Naive thymus-derived CD4-positive, alpha-beta T cell (primary cell): ENCODE measurements at regions of chr15 and their contacts with region 1.

Region 1: DNA sequence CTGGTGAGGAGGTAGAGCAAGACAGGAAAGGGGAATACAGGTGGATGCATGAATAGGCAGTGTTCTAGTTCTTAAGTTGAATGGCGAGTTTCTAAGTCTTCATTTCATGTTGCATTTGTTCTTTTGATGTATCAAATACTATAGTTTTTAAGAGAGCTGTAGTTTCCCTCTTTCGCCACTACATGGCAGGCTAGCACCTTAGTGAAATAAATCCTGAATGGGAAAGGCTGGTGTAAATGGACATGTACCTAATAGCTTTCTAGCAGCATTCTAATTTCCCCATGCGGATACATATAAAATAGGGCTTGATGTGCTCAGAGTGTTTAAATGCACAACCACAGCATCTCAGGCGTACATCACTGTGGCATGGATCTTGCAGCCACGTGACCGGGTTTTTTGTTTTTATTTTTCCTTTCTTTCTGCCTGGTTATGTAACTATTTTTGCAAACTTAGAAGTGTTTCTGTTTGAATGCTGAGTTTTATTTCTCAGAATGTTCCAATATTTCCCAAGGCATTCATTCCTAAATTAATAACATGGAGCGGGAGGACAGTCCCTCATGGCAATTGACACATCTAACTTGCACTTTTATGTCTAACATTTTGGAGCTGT is 23.5 kb upstream of the CLN6 start:
- DNase-seq: peak in 7 of 9 donors; percentile 42 to 64 (median 56)
- ATAC-seq: peak; percentile 72
- H3K4me3 ChIP-seq: no peak overlapping the region
- H3K4me3 Mint-ChIP-seq: no peak overlapping the region
- H3K27ac ChIP-seq: no peak overlapping the region
- H3K27ac Mint-ChIP-seq: no peak overlapping the region
- H3K4me1 ChIP-seq: no peaks in the 10 kb centered on the region
- H3K4me1 Mint-ChIP-seq: peaks cover 0 to 14% (median 4%) of the 10 kb centered on the region in 7 donors
- H3K27me3 ChIP-seq: no peaks in the 10 kb centered on the region
- H3K27me3 Mint-ChIP-seq: peaks cover 0 to 33% (median 0%) of the 10 kb centered on the region in 5 donors

Region 2: GRCh38 chr15:68298882-68299381 is 45.9 kb after region 1 on chr15:
- CTCF ChIA-PET with region 1: interaction called, 11 read pairs
- POLR2A ChIA-PET with region 1: interaction called, 4 read pairs
- intact Hi-C with region 1: no loop called
- DNase-seq: peak in 7 of 9 donors; percentile 37 to 56 (median 40)
- ATAC-seq: peak; percentile 82
- H3K4me3 ChIP-seq: peak overlapping the region; percentile 61
- H3K4me3 Mint-ChIP-seq: peak overlapping the region; percentile 58 to 85 (median 81)
- H3K27ac ChIP-seq: peak overlapping the region; percentile 64
- H3K27ac Mint-ChIP-seq: peak overlapping the region; percentile 79 to 95 (median 87)
- H3K4me1 ChIP-seq: peaks cover 11 to 16% of the 10 kb centered on the region in 2 donors
- H3K4me1 Mint-ChIP-seq: peaks cover 17 to 56% (median 44%) of the 10 kb centered on the region in 7 donors
- H3K27me3 ChIP-seq: no peaks in the 10 kb centered on the region
- H3K27me3 Mint-ChIP-seq: no peaks in the 10 kb centered on the region

Region 3: DNA sequence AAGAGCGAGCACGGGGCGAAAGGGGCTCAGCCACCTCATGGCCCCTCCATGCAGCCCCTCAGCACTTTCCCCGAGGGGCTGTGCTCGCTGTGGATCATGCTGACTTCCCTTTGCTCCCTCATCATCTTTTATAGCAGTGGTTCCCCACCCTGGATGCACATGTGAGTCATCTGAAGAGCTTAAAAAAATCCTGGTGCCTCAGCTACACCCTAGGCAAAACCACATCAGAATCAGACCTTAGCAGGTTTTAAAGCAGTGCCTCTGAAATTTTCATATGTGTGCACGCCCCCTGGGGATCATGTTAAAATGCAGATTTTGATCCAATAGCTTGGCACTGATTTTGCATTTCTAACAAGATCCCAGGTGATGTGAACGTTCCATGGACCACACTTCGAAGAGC is 75.4 kb after region 1 on chr15:
- CTCF ChIA-PET with region 1: interaction called, 7 read pairs
- POLR2A ChIA-PET with region 1: no interaction called
- intact Hi-C with region 1: loop called in 1 of 2 experiments (anchors 1 kb)
- DNase-seq: peak in 3 of 9 donors; percentile 28 to 60 (median 32)
- ATAC-seq: peak; percentile 75
- H3K4me3 ChIP-seq: no peak overlapping the region
- H3K4me3 Mint-ChIP-seq: peak overlapping the region in 6 of 10 donors; percentile 3 to 74 (median 32)
- H3K27ac ChIP-seq: no peak overlapping the region
- H3K27ac Mint-ChIP-seq: peak overlapping the region in 2 of 9 donors; percentile 75 to 84
- H3K4me1 ChIP-seq: peaks cover 0 to 18% of the 10 kb centered on the region in 2 donors
- H3K4me1 Mint-ChIP-seq: peaks cover 29 to 38% (median 30%) of the 10 kb centered on the region in 7 donors
- H3K27me3 ChIP-seq: no peaks in the 10 kb centered on the region
- H3K27me3 Mint-ChIP-seq: peaks cover 0 to 29% (median 0%) of the 10 kb centered on the region in 5 donors

Region 4: DNA sequence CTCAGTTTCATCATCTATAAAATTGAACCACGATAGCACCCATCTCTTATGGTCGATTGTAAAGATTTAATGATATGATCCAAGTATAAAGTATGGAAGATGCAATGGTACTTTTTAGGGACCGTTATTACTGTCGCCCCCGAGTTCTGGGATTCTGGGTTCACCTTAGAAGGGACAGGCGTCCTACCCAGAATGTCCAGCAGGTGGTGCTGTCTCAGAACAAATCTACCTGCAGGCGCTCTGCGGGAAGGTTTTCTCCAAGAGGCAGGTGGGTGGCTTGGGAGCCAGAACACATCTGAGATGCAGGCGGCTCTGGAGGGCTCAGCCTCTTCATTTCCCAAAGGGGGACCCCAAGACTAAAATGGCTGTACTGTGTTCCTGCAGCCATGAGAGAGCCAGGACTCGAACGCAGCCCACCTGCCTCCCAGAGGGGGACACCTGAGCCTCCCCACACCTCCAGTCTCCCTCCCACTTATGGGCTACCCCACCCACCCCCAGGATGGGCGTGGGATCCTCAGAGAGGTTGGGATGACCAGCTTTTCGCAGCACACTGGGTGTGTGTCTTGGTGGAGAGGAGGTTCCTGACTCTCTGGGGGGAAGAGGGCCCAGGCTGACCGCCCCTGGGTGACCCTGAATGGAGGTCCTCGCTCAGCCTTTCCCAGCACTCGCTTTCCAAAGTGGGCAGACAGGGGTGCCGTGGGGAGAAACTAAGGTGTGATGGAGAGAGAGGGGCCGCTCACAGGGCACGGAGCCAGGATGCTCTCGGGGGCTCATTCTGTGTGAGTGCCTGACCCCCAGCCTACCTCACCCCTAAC is 297.7 kb after region 1 on chr15:
- CTCF ChIA-PET with region 1: interaction called, 3 read pairs
- POLR2A ChIA-PET with region 1: no interaction called
- intact Hi-C with region 1: loop called in 1 of 2 experiments (anchors 1 kb)
- DNase-seq: peak; percentile 32 to 77 (median 55)
- ATAC-seq: peak; percentile 65
- H3K4me3 ChIP-seq: no peak overlapping the region
- H3K4me3 Mint-ChIP-seq: no peak overlapping the region
- H3K27ac ChIP-seq: no peak overlapping the region
- H3K27ac Mint-ChIP-seq: no peak overlapping the region
- H3K4me1 ChIP-seq: no peaks in the 10 kb centered on the region
- H3K4me1 Mint-ChIP-seq: peaks cover 0 to 3% (median 0%) of the 10 kb centered on the region in 7 donors
- H3K27me3 ChIP-seq: peaks cover 0 to 3% of the 10 kb centered on the region in 2 donors
- H3K27me3 Mint-ChIP-seq: peaks cover 32 to 49% (median 36%) of the 10 kb centered on the region in 5 donors

Region 5: GRCh38 chr15:68875377-68876116 is 622.5 kb after region 1 on chr15:
- CTCF ChIA-PET with region 1: no interaction called
- POLR2A ChIA-PET with region 1: no interaction called
- intact Hi-C with region 1: loop called in 1 of 2 experiments (anchors 1 kb)
- DNase-seq: peak; percentile 81 to 92 (median 87)
- ATAC-seq: peak; percentile 83
- H3K4me3 ChIP-seq: no peak overlapping the region
- H3K4me3 Mint-ChIP-seq: peak overlapping the region; percentile 2 to 72 (median 58)
- H3K27ac ChIP-seq: no peak overlapping the region
- H3K27ac Mint-ChIP-seq: no peak overlapping the region
- H3K4me1 ChIP-seq: peaks cover 0 to 4% of the 10 kb centered on the region in 2 donors
- H3K4me1 Mint-ChIP-seq: peaks cover 0 to 7% (median 0%) of the 10 kb centered on the region in 7 donors
- H3K27me3 ChIP-seq: no peaks in the 10 kb centered on the region
- H3K27me3 Mint-ChIP-seq: peaks cover 5 to 53% (median 22%) of the 10 kb centered on the region in 5 donors